GM12878 (cell line): ENCODE measurements at regions of chr20 and their contacts with region 1.

Region 1: GRCh38 chr20:41011551-41012067 is 17.0 kb upstream of the TOP1 start:
- DNase-seq: peak; percentile 95
- ATAC-seq: peak; percentile 95
- H3K4me3 ChIP-seq: peak overlapping the region; percentile 38
- H3K27ac ChIP-seq: peak overlapping the region; percentile 91
- H3K4me1 ChIP-seq: peaks cover 44% of the 10 kb centered on the region
- H3K27me3 ChIP-seq: no peaks in the 10 kb centered on the region
- CTCF ChIP-seq: no peak
- EP300 ChIP-seq: peak; percentile 83 to 88
- POLR2A ChIP-seq: no peak
- RAD21 ChIP-seq: peak; percentile 30; the same call in 1 of the 2 replicates

Region 2: DNA sequence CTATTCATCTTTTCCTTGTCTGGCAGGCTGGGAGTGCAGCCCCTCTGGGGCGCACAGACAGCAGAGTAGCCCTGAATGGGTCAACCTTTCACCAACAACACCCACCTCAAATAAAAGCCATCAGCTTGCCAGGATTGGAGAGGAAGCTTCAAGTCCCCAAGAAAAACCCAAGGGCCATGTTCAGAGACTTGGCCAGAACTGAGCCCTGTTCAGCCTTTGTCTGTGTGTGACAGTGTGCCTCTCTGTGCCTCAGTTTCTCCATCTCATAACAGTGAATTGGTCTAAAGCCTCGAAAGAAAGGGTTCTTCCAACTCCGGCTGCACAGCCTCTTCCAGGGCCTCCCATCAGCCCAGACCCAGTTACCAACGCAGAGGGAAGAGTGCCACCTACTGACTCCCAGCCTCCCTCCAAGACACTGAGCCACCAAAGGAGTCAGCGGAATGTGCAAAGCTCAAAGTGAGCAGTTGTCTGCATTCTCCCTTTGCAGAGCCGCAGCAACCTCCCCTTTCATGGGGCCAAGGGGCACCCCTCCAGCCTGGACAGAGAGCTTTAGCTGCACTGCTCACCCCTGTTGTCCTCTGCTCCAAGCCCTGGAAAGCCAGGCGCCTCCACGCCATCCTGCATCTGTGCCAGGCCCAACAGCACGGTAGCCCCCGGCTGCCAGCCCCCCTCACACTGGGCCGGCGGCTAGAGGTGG is 65.7 kb before region 1 on chr20:
- CTCF ChIA-PET with region 1: no interaction called
- POLR2A ChIA-PET with region 1: no interaction called
- RAD21 ChIA-PET with region 1: no interaction called
- SMC1A ChIA-PET with region 1: no interaction called
- in situ Hi-C with region 1: no loop called
- intact Hi-C with region 1: no loop called
- DNase-seq: no peak
- ATAC-seq: peak; percentile 78
- H3K4me3 ChIP-seq: no peak overlapping the region
- H3K27ac ChIP-seq: no peak overlapping the region
- H3K4me1 ChIP-seq: peaks cover 14% of the 10 kb centered on the region
- H3K27me3 ChIP-seq: no peaks in the 10 kb centered on the region
- CTCF ChIP-seq: peak; percentile 52 to 63 (median 60); a peak in 5 of 6 replicates
- EP300 ChIP-seq: no peak
- POLR2A ChIP-seq: no peak
- RAD21 ChIP-seq: peak; percentile 70

Region 3: GRCh38 chr20:41023544-41023943 is 11.9 kb after region 1 on chr20:
- CTCF ChIA-PET with region 1: interaction called, 3 read pairs
- POLR2A ChIA-PET with region 1: interaction called, 3 read pairs
- RAD21 ChIA-PET with region 1: interaction called, 3 read pairs
- SMC1A ChIA-PET with region 1: interaction called, 104 read pairs
- in situ Hi-C with region 1: no loop called
- intact Hi-C with region 1: no loop called
- DNase-seq: no peak
- ATAC-seq: no peak
- H3K4me3 ChIP-seq: no peak overlapping the region
- H3K27ac ChIP-seq: no peak overlapping the region
- H3K4me1 ChIP-seq: peaks cover 9% of the 10 kb centered on the region
- H3K27me3 ChIP-seq: no peaks in the 10 kb centered on the region
- CTCF ChIP-seq: no peak
- EP300 ChIP-seq: no peak
- POLR2A ChIP-seq: no peak
- RAD21 ChIP-seq: no peak

Region 4: GRCh38 chr20:41064377-41064776 is 52.8 kb after region 1 on chr20:
- CTCF ChIA-PET with region 1: interaction called, 12 read pairs
- POLR2A ChIA-PET with region 1: no interaction called
- RAD21 ChIA-PET with region 1: interaction called, 6 read pairs
- SMC1A ChIA-PET with region 1: interaction called, 8 read pairs
- in situ Hi-C with region 1: no loop called
- intact Hi-C with region 1: no loop called
- DNase-seq: peak; percentile 68
- ATAC-seq: peak; percentile 93
- H3K4me3 ChIP-seq: no peak overlapping the region
- H3K27ac ChIP-seq: peak overlapping the region; percentile 62
- H3K4me1 ChIP-seq: peaks cover 20% of the 10 kb centered on the region
- H3K27me3 ChIP-seq: no peaks in the 10 kb centered on the region
- CTCF ChIP-seq: peak; percentile 8 to 59 (median 36); a peak in 3 of 6 replicates
- EP300 ChIP-seq: no peak; a peak in 1 of 4 replicates
- POLR2A ChIP-seq: no peak
- RAD21 ChIP-seq: peak; percentile 77